Activated CD4-positive, alpha-beta memory T cell treated with anti-CD3 and anti-CD28 coated beads for 36 hours (primary cell): ENCODE measurements at regions of chr14 and their contacts with region 1.

Region 1: DNA sequence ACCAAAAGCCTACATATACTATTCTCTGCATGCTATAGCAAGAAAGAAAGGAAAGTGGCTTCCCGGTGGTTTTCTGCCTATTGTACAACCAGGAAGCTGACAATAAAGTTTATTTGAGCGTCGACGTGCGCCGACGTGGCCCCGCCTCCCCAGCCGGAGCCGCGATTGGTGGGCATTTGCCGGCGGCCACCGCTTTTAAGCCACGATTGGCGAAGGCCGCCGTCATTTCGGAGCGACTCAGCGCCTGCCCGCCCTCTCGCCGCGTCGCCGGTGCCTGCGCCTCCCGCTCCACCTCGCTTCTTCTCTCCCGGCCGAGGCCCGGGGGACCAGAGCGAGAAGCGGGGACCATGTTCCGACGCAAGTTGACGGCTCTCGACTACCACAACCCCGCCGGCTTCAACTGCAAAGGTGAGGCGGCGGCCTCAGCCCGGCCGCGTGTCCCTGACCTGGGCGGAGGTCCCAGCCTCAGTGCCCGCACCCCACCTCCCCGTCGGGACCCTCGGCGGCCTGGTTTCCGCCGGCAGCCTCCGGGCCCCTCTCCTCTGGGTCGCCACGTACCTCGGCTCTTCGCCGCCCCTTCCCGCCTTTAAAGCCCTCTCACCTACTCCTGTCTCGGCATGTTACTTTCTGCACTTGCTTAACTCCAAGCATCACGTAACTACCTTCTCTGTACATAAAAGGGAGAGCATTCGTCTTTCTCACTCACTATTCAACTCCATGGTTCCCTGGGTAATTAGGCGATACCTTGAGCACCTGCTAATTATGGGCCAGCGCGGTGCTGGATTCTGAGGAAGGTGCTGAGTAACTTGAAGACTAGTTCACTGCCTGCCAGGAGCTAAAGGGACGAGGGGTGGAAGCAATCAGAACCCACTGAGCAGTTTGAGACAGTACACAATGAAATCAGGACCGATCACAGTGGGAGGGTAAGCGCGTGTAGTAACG is at the start of gene RTRAF:
- DNase-seq: peak; percentile 94
- H3K4me3 Mint-ChIP-seq: peak within 1 kb of the TSS; percentile 89
- H3K27ac Mint-ChIP-seq: peak within 1 kb of the TSS; percentile 79
- H3K4me1 Mint-ChIP-seq: peaks cover 35% of the 10 kb centered on the region
- H3K27me3 Mint-ChIP-seq: no peaks in the 10 kb centered on the region
- total RNA-seq, gene RTRAF: 222 to 238 TPM

Region 2: DNA sequence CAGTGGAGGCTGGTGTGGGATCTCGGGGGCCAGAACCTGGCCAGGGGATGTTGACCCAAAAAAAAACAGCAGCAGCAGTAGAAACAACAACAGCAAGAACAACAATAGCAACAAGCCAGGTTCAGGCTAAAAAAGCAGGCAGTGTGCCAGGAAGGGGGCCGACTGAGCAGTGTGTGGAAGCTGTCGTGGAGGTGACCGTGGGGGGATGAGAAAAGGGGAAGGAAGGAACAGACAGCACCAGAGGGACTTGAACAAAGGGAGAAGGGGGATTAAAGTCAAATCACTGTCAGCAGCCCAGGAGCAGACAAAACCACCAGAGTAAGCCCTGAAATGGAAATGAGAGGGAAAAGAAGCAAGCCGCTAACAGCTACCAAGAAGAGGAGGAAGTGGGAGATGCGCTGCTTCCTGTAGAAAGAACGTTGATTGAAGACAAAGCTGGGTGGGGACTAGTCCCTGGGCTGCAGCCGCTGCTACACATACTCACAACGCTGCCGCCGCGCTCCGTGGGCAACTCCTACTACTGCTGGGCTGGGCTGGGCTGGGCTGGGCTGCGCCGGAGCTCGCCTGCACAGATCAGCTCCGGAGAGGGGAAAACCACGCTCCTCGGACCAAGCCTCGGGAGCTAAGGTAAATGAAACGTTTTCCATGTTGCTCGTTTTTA is 129.3 kb before region 1 on chr14 and contains the start of gene GNG2:
- CTCF ChIA-PET with region 1: no interaction called
- POLR2A ChIA-PET with region 1: interaction called, 4 read pairs
- intact Hi-C with region 1: loop called (anchors 1 kb)
- DNase-seq: peak; percentile 91
- H3K4me3 Mint-ChIP-seq: peak within 1 kb of the TSS; percentile 96
- H3K27ac Mint-ChIP-seq: peak within 1 kb of the TSS; percentile 96
- H3K4me1 Mint-ChIP-seq: peaks cover 52% of the 10 kb centered on the region
- H3K27me3 Mint-ChIP-seq: no peaks in the 10 kb centered on the region
- total RNA-seq, gene GNG2: 146 TPM

Region 3: GRCh38 chr14:51908086-51908485 is 81.5 kb before region 1 on chr14:
- CTCF ChIA-PET with region 1: no interaction called
- POLR2A ChIA-PET with region 1: no interaction called
- intact Hi-C with region 1: loop called (anchors 5 kb)
- DNase-seq: peak; percentile 43
- H3K4me3 Mint-ChIP-seq: no peak overlapping the region
- H3K27ac Mint-ChIP-seq: peak overlapping the region; percentile 38
- H3K4me1 Mint-ChIP-seq: peaks cover 69% of the 10 kb centered on the region
- H3K27me3 Mint-ChIP-seq: no peaks in the 10 kb centered on the region

Region 4: GRCh38 chr14:51950007-51950406 is 39.6 kb before region 1 on chr14:
- CTCF ChIA-PET with region 1: no interaction called
- POLR2A ChIA-PET with region 1: no interaction called
- intact Hi-C with region 1: no loop called
- DNase-seq: no peak
- H3K4me3 Mint-ChIP-seq: no peak overlapping the region
- H3K27ac Mint-ChIP-seq: no peak overlapping the region
- H3K4me1 Mint-ChIP-seq: peaks cover 14% of the 10 kb centered on the region
- H3K27me3 Mint-ChIP-seq: no peaks in the 10 kb centered on the region

Region 5: DNA sequence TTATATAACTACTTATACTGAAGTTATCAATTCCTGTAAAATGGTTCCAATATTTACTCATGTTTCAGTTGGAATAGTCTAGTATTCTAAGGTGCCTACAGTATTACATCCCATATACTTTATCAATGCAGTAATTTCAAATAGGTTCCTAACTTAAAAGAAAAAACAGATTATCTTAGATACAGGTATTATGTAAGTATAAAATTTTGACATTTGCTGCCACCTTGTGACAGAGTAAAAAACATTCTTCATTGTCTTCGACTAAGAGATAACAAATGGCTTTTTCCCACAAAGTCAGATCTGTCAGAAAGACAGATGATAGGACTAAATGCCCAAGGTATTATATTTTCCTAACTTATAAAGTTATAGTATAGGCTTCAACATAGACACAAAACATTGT is 484.0 kb after region 1 on chr14:
- CTCF ChIA-PET with region 1: no interaction called
- POLR2A ChIA-PET with region 1: no interaction called
- intact Hi-C with region 1: loop called (anchors 5 kb)
- DNase-seq: no peak
- H3K4me3 Mint-ChIP-seq: no peak overlapping the region
- H3K27ac Mint-ChIP-seq: no peak overlapping the region
- H3K4me1 Mint-ChIP-seq: peaks cover 4% of the 10 kb centered on the region
- H3K27me3 Mint-ChIP-seq: no peaks in the 10 kb centered on the region